ENCODE measurements at regions of chrX and their contacts with region 1.

Region 1: GRCh38 chrX:49100704-49101628 is 21.3 kb upstream of the WDR45 start:
- DNase-seq: peak; percentile 78
- ATAC-seq: peak; percentile 92
- H3K4me3 Mint-ChIP-seq: peak overlapping the region; percentile 90
- H3K27ac Mint-ChIP-seq: peak overlapping the region; percentile 95
- H3K4me1 Mint-ChIP-seq: peaks cover 9% of the 10 kb centered on the region
- H3K27me3 Mint-ChIP-seq: no peaks in the 10 kb centered on the region
- CTCF ChIP-seq: no peak

Region 2: GRCh38 chrX:49079489-49080428 is 21.2 kb before region 1 on chrX and contains the start of gene WDR45:
- CTCF ChIA-PET with region 1: no interaction called
- POLR2A ChIA-PET with region 1: interaction called, 5 read pairs
- intact Hi-C with region 1: loop called (anchors 2 kb)
- DNase-seq: peak; percentile 58
- ATAC-seq: peak; percentile 83
- H3K4me3 Mint-ChIP-seq: peak within 1 kb of the TSS; percentile 91
- H3K27ac Mint-ChIP-seq: peak within 1 kb of the TSS; percentile 98
- H3K4me1 Mint-ChIP-seq: peaks cover 10% of the 10 kb centered on the region
- H3K27me3 Mint-ChIP-seq: no peaks in the 10 kb centered on the region
- CTCF ChIP-seq: no peak
- total RNA-seq, gene WDR45: 48.8 and 55.8 TPM in 2 replicates

Region 3: DNA sequence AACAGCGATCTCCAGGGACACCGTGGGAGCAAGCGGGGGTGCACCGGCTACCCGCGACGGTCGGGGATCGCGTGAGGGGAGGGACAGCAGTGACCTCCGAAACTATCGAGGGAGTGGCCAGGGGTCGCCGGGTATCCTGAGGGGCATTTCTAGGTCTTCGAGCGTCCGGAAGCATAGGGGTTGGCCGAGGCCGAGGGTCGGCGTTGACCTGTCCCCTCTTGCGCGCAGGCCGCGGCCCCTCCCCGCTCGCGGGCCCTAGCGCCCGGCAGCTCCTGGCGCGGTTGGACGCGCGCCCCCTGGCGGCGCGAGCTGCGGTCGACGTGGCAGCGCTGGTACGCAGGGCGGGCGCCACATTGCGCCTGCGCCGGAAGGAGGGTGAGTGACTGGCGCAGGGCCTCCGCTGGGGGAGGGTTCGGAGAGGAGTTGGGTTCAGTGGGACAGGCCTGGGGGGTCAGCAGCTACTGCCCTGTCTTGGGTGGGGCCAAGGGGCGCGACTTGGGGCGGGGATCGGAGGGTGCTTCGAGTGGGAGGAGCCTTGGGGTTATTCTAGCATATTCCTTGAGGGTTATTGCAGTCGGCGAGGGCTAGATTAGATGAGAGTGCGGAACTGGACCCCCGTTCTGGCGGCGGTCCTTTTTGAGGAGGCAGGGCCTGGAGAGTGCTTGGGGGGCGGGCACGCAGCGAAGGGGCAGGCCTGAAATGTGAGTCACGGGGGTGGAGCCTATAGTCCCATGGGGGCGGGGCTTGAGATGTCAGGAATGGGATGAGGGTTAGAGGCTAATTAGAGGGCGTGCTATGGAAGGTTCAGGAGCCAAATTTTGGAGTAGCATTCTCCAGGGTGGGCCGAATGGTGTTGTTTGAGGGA is 62.8 kb after region 1 on chrX:
- CTCF ChIA-PET with region 1: no interaction called
- POLR2A ChIA-PET with region 1: interaction called, 7 read pairs
- intact Hi-C with region 1: loop called (anchors 10 kb)
- DNase-seq: peak; percentile 79
- ATAC-seq: peak; percentile 60
- H3K4me3 Mint-ChIP-seq: peak overlapping the region; percentile 83
- H3K27ac Mint-ChIP-seq: peak overlapping the region; percentile 92
- H3K4me1 Mint-ChIP-seq: peaks cover 31% of the 10 kb centered on the region
- H3K27me3 Mint-ChIP-seq: no peaks in the 10 kb centered on the region
- CTCF ChIP-seq: no peak

Measured in activated B cell treated with CpG ODN at 0.5 μM for 24 hours (primary cell).